HCT116 (cell line): ENCODE measurements at regions of chr10 and their contacts with region 1.

Region 1: DNA sequence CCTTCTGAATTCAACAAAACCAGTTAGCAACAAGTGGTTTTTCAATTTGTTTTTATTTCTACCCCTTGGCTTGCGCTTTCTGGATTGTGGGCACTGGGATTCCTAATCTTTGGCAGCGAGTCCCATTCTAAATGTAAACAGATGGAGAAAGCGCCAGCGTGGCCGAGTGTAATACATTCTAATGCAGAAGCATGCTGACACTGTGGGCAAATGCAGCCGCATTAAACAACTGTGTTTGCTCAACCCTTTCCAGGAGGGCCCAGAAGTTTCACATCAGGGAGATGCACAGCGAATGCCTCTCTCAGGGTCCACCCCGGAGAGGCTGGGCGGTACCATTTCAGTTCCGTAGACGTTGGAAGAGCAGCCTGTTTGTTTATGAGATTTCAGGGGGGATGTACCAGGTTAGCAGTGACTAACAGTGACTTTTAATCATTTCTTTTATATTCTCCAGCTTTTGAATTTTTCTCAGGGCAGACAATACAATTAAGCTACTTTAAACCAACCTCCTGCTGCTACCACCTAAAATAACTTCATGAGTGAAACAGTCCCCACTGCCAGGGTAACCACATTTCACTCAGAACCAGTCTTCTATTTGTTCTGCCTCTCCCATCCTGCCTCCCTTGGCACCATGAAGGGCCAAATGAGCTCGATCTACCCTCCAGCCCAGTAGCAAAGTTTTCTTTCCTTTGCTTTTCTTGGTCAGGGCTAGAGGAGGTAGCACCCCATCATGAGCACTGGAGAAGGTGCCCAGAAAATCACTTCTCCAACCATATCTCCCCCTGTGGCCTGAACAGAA is 164.2 kb upstream of the ITGB1 start:
- DNase-seq: no peak
- ATAC-seq: no peak
- H3K4me3 ChIP-seq: no peak overlapping the region
- H3K27ac ChIP-seq: no peak overlapping the region
- H3K4me1 ChIP-seq: no peaks in the 10 kb centered on the region
- H3K27me3 ChIP-seq: no peaks in the 10 kb centered on the region
- CTCF ChIP-seq: no peak
- POLR2A ChIP-seq: no peak
- RAD21 ChIP-seq: no peak

Region 2: DNA sequence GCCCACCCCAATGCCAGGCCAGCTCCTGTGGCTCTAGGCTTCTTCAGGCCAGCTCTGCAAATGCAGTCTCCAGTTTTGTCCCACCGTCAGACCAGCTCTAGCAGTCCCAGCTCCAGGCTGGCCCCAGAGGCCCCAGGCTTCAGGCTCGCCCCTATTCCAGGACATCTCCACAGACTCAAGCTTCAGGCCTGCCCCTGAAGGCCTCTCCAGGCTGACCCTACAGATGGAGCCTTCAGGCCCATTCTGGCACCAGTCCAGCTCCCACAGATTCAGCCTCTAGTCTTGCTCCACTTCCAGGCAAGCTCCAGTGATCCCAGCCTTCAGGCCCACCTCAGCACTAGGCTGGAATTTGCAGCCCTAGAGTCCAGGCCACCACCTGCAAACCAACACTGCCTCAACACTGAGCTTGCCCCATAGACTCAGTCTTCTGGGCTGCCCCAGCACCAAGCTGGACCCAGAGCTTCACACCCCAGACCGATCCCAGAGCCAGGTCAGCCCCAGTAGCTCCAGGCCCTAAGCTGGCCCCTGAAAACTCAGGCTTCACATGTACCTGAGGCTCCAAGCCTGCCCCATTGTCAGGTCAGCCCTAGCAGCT is 334.4 kb before region 1 on chr10:
- CTCF ChIA-PET with region 1: no interaction called
- POLR2A ChIA-PET with region 1: no interaction called
- RAD21 ChIA-PET with region 1: no interaction called
- intact Hi-C with region 1: loop called (anchors 5 kb)
- DNase-seq: no peak
- ATAC-seq: no peak
- H3K4me3 ChIP-seq: no peak overlapping the region
- H3K27ac ChIP-seq: no peak overlapping the region
- H3K4me1 ChIP-seq: no peaks in the 10 kb centered on the region
- H3K27me3 ChIP-seq: no peaks in the 10 kb centered on the region
- CTCF ChIP-seq: no peak
- POLR2A ChIP-seq: no peak
- RAD21 ChIP-seq: no peak

Region 3: GRCh38 chr10:32982911-32983909 is 139.0 kb before region 1 on chr10:
- CTCF ChIA-PET with region 1: no interaction called
- POLR2A ChIA-PET with region 1: no interaction called
- RAD21 ChIA-PET with region 1: no interaction called
- intact Hi-C with region 1: no loop called
- DNase-seq: peak; percentile 84
- ATAC-seq: peak; percentile 60
- H3K4me3 ChIP-seq: peak overlapping the region in 1 of 2 experiments; percentile 55; a peak in 2 of 4 replicates
- H3K27ac ChIP-seq: peak overlapping the region; percentile 71
- H3K4me1 ChIP-seq: peaks cover 64 to 82% of the 10 kb centered on the region in 2 experiments
- H3K27me3 ChIP-seq: no peaks in the 10 kb centered on the region
- CTCF ChIP-seq: no peak
- POLR2A ChIP-seq: no peak
- RAD21 ChIP-seq: peak; percentile 36; the same call in 1 of the 2 replicates

Region 4: DNA sequence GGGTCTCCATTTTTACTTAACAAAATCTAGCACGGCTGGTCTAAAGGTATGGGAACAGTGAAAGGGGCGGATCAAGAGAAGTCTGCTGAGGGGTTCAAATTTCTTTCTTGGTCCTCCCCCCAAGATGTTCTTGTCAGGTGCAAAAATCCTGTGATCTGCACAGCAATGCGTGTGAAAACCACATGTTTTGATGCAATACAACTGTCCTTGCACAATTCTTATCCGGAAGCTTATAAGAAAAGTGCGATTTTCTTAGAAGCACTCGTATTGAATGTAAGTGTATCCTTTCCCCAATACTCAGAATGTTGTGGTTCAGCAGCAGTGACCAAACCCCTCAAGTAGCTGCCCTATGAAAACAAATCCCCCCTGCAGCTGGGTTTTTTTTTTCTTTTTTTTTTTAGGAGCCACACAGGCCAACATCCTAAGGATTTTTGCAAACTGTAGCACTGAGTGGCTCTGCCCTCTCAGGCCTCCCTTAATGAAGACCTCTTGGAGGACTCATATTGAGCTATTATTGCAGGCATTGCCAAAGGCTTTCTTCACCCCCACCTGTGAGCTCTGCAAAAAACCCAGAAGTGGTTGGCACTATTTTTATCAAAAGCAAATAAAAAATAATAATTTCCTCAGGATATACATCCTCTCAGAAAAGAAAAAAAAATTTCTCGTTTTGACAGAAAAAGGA is 12.3 kb before region 1 on chr10:
- CTCF ChIA-PET with region 1: no interaction called
- POLR2A ChIA-PET with region 1: no interaction called
- RAD21 ChIA-PET with region 1: no interaction called
- intact Hi-C with region 1: no loop called
- DNase-seq: no peak
- ATAC-seq: no peak
- H3K4me3 ChIP-seq: no peak overlapping the region
- H3K27ac ChIP-seq: no peak overlapping the region
- H3K4me1 ChIP-seq: peaks cover 0 to 6% of the 10 kb centered on the region in 2 experiments; a peak in 1 of 4 replicates
- H3K27me3 ChIP-seq: no peaks in the 10 kb centered on the region
- CTCF ChIP-seq: no peak
- POLR2A ChIP-seq: no peak
- RAD21 ChIP-seq: no peak

Region 5: DNA sequence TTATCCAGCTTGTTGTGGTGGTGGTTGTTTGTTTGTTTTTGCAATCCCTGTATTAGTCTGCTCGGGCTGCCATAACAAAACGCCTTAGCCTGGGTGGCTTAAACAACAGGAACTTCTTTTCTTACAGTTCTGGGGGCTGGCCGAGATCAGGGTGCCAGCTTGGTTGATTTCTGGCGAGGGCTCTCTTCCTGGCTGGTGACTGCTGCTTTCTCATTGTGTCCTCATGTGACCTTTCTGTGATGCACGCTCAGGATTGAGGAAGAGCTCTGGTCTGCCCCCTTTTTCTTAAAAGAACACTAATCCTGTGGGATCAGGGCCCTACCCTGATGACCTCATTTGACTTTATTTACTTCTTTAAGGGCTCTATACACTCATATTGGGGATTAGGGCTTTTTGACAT is 319.3 kb after region 1 on chr10:
- CTCF ChIA-PET with region 1: no interaction called
- POLR2A ChIA-PET with region 1: no interaction called
- RAD21 ChIA-PET with region 1: no interaction called
- intact Hi-C with region 1: no loop called
- DNase-seq: no peak
- ATAC-seq: no peak
- H3K4me3 ChIP-seq: no peak overlapping the region
- H3K27ac ChIP-seq: no peak overlapping the region
- H3K4me1 ChIP-seq: no peaks in the 10 kb centered on the region
- H3K27me3 ChIP-seq: no peaks in the 10 kb centered on the region
- CTCF ChIP-seq: no peak
- POLR2A ChIP-seq: no peak
- RAD21 ChIP-seq: no peak